GM23248 (cell line): ENCODE measurements at regions of chr6 and their contacts with region 1.

Region 1: DNA sequence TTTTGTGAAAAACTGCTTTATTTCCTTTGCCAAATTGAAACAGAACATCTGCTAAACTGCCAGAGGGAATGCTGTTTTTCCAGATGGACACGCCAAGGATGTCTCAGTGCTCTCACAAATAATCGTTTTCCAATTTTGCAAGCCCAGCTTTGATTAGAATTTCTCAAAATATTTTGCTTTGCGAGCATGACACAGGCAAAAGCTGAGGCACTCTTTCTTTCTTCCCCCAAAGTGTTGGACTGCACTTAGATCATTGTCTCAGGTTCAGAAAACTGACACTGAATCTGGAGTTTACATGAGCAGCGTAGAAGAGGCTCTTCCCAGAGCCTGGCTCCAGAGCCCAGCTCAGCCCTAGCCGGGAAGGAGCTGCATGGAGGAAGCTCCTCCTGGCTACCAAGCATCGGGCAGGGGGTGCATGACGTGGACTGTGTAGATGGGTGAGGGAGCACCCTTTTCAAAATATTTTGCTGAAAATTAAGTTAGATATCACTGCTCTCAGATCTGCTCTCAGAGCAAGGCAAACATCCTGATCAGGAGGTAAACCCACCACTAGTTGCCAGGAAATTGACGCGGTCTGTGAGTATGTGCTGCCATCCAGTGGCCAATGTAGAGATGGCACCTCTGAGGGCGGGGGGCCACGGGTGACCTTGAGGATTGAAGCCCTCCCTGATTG is 107.5 kb downstream of the SLC22A3 start:
- DNase-seq: peak; percentile 71
- H3K4me3 ChIP-seq: peak overlapping the region; percentile 76
- H3K27ac ChIP-seq: no peak overlapping the region
- H3K4me1 ChIP-seq: peaks cover 8% of the 10 kb centered on the region
- H3K27me3 ChIP-seq: no peaks in the 10 kb centered on the region

Region 2: GRCh38 chr6:159693128-159693893 is 762.4 kb before region 1 on chr6 and contains the start of gene SOD2:
- in situ Hi-C with region 1: loop called (anchors 25 kb)
- DNase-seq: peak; percentile 86
- H3K4me3 ChIP-seq: peak within 1 kb of the TSS; percentile 88
- H3K27ac ChIP-seq: peak within 1 kb of the TSS; percentile 81
- H3K4me1 ChIP-seq: peaks cover 23% of the 10 kb centered on the region
- H3K27me3 ChIP-seq: no peaks in the 10 kb centered on the region
- total RNA-seq, gene SOD2: 62.6 and 74.0 TPM in 2 replicates

Region 3: DNA sequence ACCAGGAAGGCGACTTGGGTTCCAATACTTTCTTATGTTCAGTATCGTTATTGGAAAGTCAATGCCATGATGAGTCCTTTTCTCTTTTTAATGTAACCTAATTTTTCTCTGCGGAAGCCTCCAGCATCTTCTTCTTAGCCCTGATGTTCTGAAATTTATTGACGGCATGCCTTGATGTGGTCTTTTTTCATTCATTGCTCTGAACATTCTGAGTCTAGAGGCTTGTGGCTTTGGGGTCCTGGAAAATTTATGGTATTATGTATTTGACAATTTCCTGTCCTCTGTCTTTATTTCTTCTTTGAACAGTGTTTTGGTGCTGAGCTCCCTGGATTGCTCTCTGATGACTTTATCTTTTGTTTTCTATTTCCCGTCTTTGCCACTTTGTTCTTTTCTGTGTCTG is 593.6 kb before region 1 on chr6:
- in situ Hi-C with region 1: loop called (anchors 10 kb)
- DNase-seq: no peak
- H3K4me3 ChIP-seq: no peak overlapping the region
- H3K27ac ChIP-seq: no peak overlapping the region
- H3K4me1 ChIP-seq: no peaks in the 10 kb centered on the region
- H3K27me3 ChIP-seq: no peaks in the 10 kb centered on the region; the same call in 1 of the 2 replicates

Region 4: DNA sequence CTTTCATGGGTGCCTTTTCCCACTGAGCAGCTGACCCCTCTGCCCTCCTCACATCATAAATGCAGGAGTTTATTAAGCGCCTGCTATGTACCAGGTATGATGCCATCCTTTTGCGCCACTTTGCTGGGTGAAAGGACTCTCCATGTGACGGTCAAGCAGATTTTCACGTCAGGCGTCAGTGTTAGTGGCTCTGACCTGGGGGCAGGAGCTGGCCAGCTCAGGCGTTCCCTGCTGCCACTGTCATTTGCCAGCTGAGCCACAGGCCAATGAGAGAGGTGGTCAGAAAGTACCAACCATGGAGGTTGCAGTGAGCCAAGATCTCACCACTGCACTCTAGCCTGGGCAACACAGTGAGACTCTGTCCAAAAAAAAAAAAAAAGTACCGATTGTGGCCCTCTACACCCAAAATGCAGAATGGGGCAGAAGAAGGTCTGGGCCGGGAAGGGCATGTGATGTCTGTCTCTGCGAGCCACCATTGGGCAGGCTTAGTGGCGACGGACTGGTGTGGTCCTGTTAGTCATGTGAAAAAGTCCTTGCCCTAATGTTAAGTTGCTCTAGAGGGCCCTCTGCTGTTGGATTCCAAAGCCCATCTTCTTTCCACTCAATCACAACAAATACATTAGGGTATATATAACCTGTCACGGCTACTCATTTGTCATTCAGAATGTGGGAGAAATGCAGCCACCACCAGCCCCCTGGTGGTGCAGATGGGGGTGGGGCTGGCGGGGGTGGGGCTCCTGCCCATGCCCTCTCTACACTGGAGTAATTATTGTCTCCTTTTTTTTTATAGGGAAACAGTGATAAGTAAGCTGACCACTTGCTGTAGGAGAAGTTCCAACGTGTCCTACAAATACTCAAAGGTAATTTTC is 352.5 kb before region 1 on chr6:
- in situ Hi-C with region 1: loop called (anchors 10 kb)
- DNase-seq: peak; percentile 66
- H3K4me3 ChIP-seq: no peak overlapping the region
- H3K27ac ChIP-seq: no peak overlapping the region
- H3K4me1 ChIP-seq: no peaks in the 10 kb centered on the region
- H3K27me3 ChIP-seq: no peaks in the 10 kb centered on the region